AG04449 (cell line): ENCODE measurements at regions of chr11 and their contacts with region 1.

Region 1: DNA sequence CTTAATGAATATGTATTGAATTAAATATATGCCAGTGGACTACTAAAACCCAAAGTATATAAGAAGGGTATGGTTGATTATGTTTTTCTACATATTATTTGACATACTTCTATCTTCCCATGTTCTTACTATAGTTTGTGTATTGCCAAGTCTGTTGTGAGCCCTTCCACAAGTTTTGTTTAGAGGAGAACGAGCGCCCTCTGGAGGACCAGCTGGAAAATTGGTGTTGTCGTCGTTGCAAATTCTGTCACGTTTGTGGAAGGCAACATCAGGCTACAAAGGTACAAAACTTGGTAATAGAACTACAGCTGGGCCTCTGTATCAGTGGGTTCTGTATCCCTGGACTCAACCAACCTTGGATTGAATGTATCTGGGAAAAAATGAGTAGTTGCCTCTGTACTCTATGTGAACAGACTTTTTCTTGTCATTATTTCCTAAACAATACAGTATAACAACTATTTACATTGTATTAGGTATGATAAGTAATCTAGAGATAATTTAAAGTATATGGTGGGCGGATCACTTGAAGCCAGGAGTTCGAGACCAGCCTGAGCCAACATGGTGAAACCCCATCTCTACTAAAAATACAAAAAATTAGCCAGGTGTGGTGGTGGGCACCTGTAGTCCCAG is 38.7 kb upstream of the TTC36 start:
- DNase-seq: peak; percentile 31
- H3K4me3 ChIP-seq: no peak overlapping the region
- CTCF ChIP-seq: peak; percentile 77

Region 2: GRCh38 chr11:118401151-118401878 is 87.3 kb before region 1 on chr11 and contains the start of gene ATP5MG:
- CTCF ChIA-PET with region 1: interaction called, 21 read pairs
- POLR2A ChIA-PET with region 1: interaction called, 3 read pairs
- DNase-seq: no peak
- H3K4me3 ChIP-seq: peak within 1 kb of the TSS; percentile 88
- CTCF ChIP-seq: no peak

Region 3: DNA sequence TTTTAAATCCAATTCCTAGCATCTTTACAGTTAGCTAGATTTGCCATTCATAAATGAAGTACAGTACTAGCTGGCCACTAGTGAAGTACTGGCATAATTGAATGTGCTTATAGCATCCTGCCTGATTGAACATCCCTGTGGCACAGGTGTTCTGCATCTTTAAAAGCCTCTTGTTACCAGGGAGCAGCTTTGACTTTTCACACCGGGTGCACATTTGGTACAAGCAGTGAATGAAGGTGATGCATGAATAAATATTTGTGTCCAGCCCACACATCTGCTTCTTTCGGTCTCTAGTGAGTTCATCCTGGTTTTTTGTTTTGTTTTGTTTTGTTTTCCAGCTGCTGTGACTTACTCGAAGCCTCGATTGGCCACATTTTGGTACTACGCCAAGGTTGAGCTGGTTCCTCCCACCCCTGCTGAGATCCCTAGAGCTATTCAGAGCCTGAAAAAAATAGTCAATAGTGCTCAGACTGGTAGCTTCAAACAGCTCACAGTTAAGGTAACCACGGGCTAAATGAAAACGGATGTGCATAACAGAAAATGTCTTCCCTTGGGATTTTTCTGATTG is 81.9 kb before region 1 on chr11:
- CTCF ChIA-PET with region 1: interaction called, 11 read pairs
- POLR2A ChIA-PET with region 1: interaction called, 3 read pairs
- DNase-seq: no peak
- H3K4me3 ChIP-seq: no peak overlapping the region
- CTCF ChIP-seq: no peak

Region 4: GRCh38 chr11:118476676-118477075 is 11.9 kb before region 1 on chr11:
- CTCF ChIA-PET with region 1: interaction called, 11 read pairs
- POLR2A ChIA-PET with region 1: no interaction called
- DNase-seq: no peak
- H3K4me3 ChIP-seq: no peak overlapping the region
- CTCF ChIP-seq: no peak

Region 5: GRCh38 chr11:118519549-118519948 is 31.0 kb after region 1 on chr11:
- CTCF ChIA-PET with region 1: interaction called, 10 read pairs
- POLR2A ChIA-PET with region 1: no interaction called
- DNase-seq: no peak
- H3K4me3 ChIP-seq: no peak overlapping the region
- CTCF ChIP-seq: no peak

Region 6: GRCh38 chr11:118744046-118744445 is 255.5 kb after region 1 on chr11:
- CTCF ChIA-PET with region 1: no interaction called
- POLR2A ChIA-PET with region 1: no interaction called
- DNase-seq: no peak
- H3K4me3 ChIP-seq: no peak overlapping the region
- CTCF ChIP-seq: no peak